A673 (cell line): ENCODE measurements at regions of chr5 and their contacts with region 1.

Region 1: GRCh38 chr5:36079200-36079761 is 12.6 kb upstream of the UGT3A2 start:
- DNase-seq: peak; percentile 86
- H3K4me3 ChIP-seq: no peak overlapping the region
- H3K27ac ChIP-seq: no peak overlapping the region
- H3K4me1 ChIP-seq: peaks cover 17% of the 10 kb centered on the region
- H3K27me3 ChIP-seq: no peaks in the 10 kb centered on the region
- CTCF ChIP-seq: peak; percentile 82

Region 2: GRCh38 chr5:36060420-36060887 is 18.8 kb before region 1 on chr5:
- CTCF ChIA-PET with region 1: no interaction called
- POLR2A ChIA-PET with region 1: interaction called, 11 read pairs
- intact Hi-C with region 1: no loop called
- DNase-seq: peak; percentile 70
- H3K4me3 ChIP-seq: no peak overlapping the region
- H3K27ac ChIP-seq: peak overlapping the region; percentile 84
- H3K4me1 ChIP-seq: peaks cover 53% of the 10 kb centered on the region
- H3K27me3 ChIP-seq: no peaks in the 10 kb centered on the region
- CTCF ChIP-seq: peak; percentile 63

Region 3: GRCh38 chr5:36089989-36090564 is 10.8 kb after region 1 on chr5:
- CTCF ChIA-PET with region 1: interaction called, 19 read pairs
- POLR2A ChIA-PET with region 1: no interaction called
- intact Hi-C with region 1: no loop called
- DNase-seq: peak; percentile 77
- H3K4me3 ChIP-seq: no peak overlapping the region
- H3K27ac ChIP-seq: no peak overlapping the region
- H3K4me1 ChIP-seq: peaks cover 8% of the 10 kb centered on the region
- H3K27me3 ChIP-seq: no peaks in the 10 kb centered on the region
- CTCF ChIP-seq: peak; percentile 69

Region 4: DNA sequence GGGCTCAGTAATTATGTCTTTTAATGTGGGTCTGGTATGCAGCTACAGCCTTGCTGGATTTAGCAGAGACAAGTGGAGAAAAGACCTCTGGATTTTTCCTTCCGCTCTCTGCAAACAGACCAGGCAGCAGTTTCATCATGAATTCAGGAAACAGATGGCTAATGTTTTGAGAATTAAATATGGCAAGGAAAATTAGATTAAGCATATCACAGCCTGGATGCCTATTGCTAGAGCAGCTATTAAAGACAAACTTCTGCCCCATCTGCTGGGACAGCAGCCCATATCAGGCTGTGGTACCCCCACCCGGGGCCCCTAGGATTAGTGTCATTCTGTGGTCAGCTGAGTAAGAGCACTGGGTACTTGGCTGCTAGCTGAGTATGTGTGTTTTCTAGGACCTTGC is 78.9 kb after region 1 on chr5:
- CTCF ChIA-PET with region 1: interaction called, 11 read pairs
- POLR2A ChIA-PET with region 1: interaction called, 4 read pairs
- intact Hi-C with region 1: loop called (anchors 5 kb)
- DNase-seq: peak; percentile 87
- H3K4me3 ChIP-seq: peak overlapping the region; percentile 17
- H3K27ac ChIP-seq: peak overlapping the region; percentile 89
- H3K4me1 ChIP-seq: peaks cover 75% of the 10 kb centered on the region
- H3K27me3 ChIP-seq: no peaks in the 10 kb centered on the region
- CTCF ChIP-seq: no peak

Region 5: GRCh38 chr5:36168737-36169136 is 89.5 kb after region 1 on chr5:
- CTCF ChIA-PET with region 1: no interaction called
- POLR2A ChIA-PET with region 1: no interaction called
- intact Hi-C with region 1: no loop called
- DNase-seq: no peak
- H3K4me3 ChIP-seq: no peak overlapping the region
- H3K27ac ChIP-seq: no peak overlapping the region
- H3K4me1 ChIP-seq: peaks cover 4% of the 10 kb centered on the region
- H3K27me3 ChIP-seq: no peaks in the 10 kb centered on the region
- CTCF ChIP-seq: no peak

Region 6: GRCh38 chr5:36507332-36507952 is 428.2 kb after region 1 on chr5:
- CTCF ChIA-PET with region 1: no interaction called
- POLR2A ChIA-PET with region 1: no interaction called
- intact Hi-C with region 1: loop called (anchors 10 kb)
- DNase-seq: peak; percentile 85
- H3K4me3 ChIP-seq: no peak overlapping the region
- H3K27ac ChIP-seq: no peak overlapping the region
- H3K4me1 ChIP-seq: no peaks in the 10 kb centered on the region
- H3K27me3 ChIP-seq: no peaks in the 10 kb centered on the region
- CTCF ChIP-seq: peak; percentile 88